Naive thymus-derived CD4-positive, alpha-beta T cell (primary cell): ENCODE measurements at regions of chr5 and their contacts with region 1.

Region 1: DNA sequence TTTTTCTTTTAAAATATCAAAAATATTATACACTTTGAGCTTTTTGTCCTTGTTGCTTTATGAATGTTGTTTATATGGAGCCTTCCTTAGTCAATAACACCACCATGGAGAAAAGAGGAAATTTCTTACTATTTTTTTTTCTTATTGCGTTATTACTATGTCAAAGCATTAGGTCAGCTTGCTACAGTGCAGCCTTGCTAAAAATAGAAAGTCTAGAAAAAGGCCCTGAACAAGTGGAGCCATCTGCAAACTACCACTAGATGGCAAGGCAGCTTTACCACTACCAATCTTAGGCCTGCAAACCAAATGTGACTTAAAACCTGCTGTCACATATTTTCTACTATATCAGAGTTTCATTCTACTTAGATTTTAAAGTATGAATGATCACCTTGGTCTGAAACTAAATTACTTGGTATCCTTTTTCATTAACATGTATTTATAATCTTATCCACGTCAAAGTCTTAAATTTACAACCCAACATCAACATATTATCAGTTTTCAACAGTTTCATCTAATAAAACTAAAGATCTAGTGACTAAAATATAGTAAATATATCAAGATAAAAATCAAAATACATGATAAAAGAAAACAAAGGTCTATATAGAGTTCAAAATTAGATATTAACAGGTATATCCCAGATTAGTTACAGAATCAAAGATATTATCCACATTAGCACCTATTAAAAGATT is 113.1 kb upstream of the ACOT12 start:
- DNase-seq: peak in 7 of 9 donors; percentile 34 to 66 (median 55)
- ATAC-seq: peak; percentile 96
- H3K4me3 ChIP-seq: no peak overlapping the region
- H3K4me3 Mint-ChIP-seq: no peak overlapping the region
- H3K27ac ChIP-seq: no peak overlapping the region
- H3K27ac Mint-ChIP-seq: no peak overlapping the region
- H3K4me1 ChIP-seq: no peaks in the 10 kb centered on the region
- H3K4me1 Mint-ChIP-seq: peaks cover 0 to 27% (median 8%) of the 10 kb centered on the region in 7 donors
- H3K27me3 ChIP-seq: no peaks in the 10 kb centered on the region
- H3K27me3 Mint-ChIP-seq: no peaks in the 10 kb centered on the region

Region 2: GRCh38 chr5:81140943-81141342 is 366.1 kb before region 1 on chr5:
- CTCF ChIA-PET with region 1: no interaction called
- POLR2A ChIA-PET with region 1: no interaction called
- intact Hi-C with region 1: no loop called
- DNase-seq: no peak
- ATAC-seq: no peak
- H3K4me3 ChIP-seq: no peak overlapping the region
- H3K4me3 Mint-ChIP-seq: no peak overlapping the region
- H3K27ac ChIP-seq: no peak overlapping the region
- H3K27ac Mint-ChIP-seq: no peak overlapping the region
- H3K4me1 ChIP-seq: no peaks in the 10 kb centered on the region
- H3K4me1 Mint-ChIP-seq: peaks cover 0 to 27% (median 8%) of the 10 kb centered on the region in 7 donors
- H3K27me3 ChIP-seq: no peaks in the 10 kb centered on the region
- H3K27me3 Mint-ChIP-seq: no peaks in the 10 kb centered on the region

Region 3: GRCh38 chr5:81425569-81425968 is 81.5 kb before region 1 on chr5:
- CTCF ChIA-PET with region 1: interaction called, 5 read pairs
- POLR2A ChIA-PET with region 1: no interaction called
- intact Hi-C with region 1: loop called (anchors 1 to 5 kb)
- DNase-seq: peak in 7 of 9 donors; percentile 15 to 72 (median 58)
- ATAC-seq: peak; percentile 73
- H3K4me3 ChIP-seq: no peak overlapping the region
- H3K4me3 Mint-ChIP-seq: peak overlapping the region in 2 of 10 donors; percentile 6 to 8
- H3K27ac ChIP-seq: no peak overlapping the region
- H3K27ac Mint-ChIP-seq: peak overlapping the region in 6 of 9 donors; percentile 9 to 65 (median 48)
- H3K4me1 ChIP-seq: peaks cover 0 to 6% of the 10 kb centered on the region in 2 donors
- H3K4me1 Mint-ChIP-seq: peaks cover 3 to 25% (median 13%) of the 10 kb centered on the region in 7 donors
- H3K27me3 ChIP-seq: no peaks in the 10 kb centered on the region
- H3K27me3 Mint-ChIP-seq: no peaks in the 10 kb centered on the region

Region 4: DNA sequence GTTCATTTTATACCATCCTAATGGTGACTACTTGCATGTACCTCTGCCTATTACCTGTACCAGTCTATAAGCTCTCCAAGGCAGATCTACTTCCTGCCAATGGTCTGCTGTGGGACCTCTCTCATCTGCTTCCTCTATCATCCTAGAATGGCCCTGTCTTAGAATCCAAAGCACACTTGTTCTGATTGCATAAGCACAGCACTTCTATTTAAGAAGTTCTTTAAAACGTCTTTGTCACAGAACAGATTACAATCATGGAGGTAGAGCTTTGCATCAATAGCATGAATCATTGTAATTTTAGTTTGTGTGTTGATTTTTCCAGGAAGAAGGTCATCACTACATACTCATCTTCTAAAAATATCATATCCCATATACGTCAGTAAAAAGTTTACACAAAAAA is 18.6 kb after region 1 on chr5:
- CTCF ChIA-PET with region 1: no interaction called
- POLR2A ChIA-PET with region 1: no interaction called
- intact Hi-C with region 1: loop called in 1 of 2 experiments (anchors 2 kb)
- DNase-seq: no peak
- ATAC-seq: peak; percentile 48
- H3K4me3 ChIP-seq: no peak overlapping the region
- H3K4me3 Mint-ChIP-seq: peak overlapping the region in 1 of 10 donors; percentile 0
- H3K27ac ChIP-seq: no peak overlapping the region
- H3K27ac Mint-ChIP-seq: peak overlapping the region in 3 of 9 donors; percentile 7 to 20 (median 10)
- H3K4me1 ChIP-seq: no peaks in the 10 kb centered on the region
- H3K4me1 Mint-ChIP-seq: peaks cover 6 to 38% (median 28%) of the 10 kb centered on the region in 7 donors
- H3K27me3 ChIP-seq: no peaks in the 10 kb centered on the region
- H3K27me3 Mint-ChIP-seq: no peaks in the 10 kb centered on the region

Region 5: GRCh38 chr5:82165740-82166530 is 658.9 kb after region 1 on chr5:
- CTCF ChIA-PET with region 1: interaction called, 20 read pairs
- POLR2A ChIA-PET with region 1: no interaction called
- intact Hi-C with region 1: loop called (anchors 1 kb)
- DNase-seq: peak in 7 of 9 donors; percentile 39 to 70 (median 58)
- ATAC-seq: peak; percentile 96
- H3K4me3 ChIP-seq: no peak overlapping the region
- H3K4me3 Mint-ChIP-seq: no peak overlapping the region
- H3K27ac ChIP-seq: no peak overlapping the region
- H3K27ac Mint-ChIP-seq: peak overlapping the region in 6 of 9 donors; percentile 3 to 65 (median 17)
- H3K4me1 ChIP-seq: no peaks in the 10 kb centered on the region
- H3K4me1 Mint-ChIP-seq: peaks cover 0 to 12% (median 7%) of the 10 kb centered on the region in 7 donors
- H3K27me3 ChIP-seq: no peaks in the 10 kb centered on the region
- H3K27me3 Mint-ChIP-seq: no peaks in the 10 kb centered on the region